T-cell (primary cell): ENCODE measurements at regions of chr14 and their contacts with region 1.

Region 1: GRCh38 chr14:53306267-53306721 is 153.2 kb upstream of the DDHD1 start:
- DNase-seq: peak in 22 of 35 experiments; percentile 2 to 61 (median 14)
- ATAC-seq: peak in 2 of 4 experiments; percentile 37 to 38
- H3K4me3 ChIP-seq: peak overlapping the region in 1 of 2 donors; percentile 10
- H3K4me3 Mint-ChIP-seq: peak overlapping the region; percentile 57 to 69 (median 60)
- H3K27ac ChIP-seq: no peak overlapping the region
- H3K27ac Mint-ChIP-seq: no peak overlapping the region
- H3K4me1 ChIP-seq: peaks cover 0 to 5% of the 10 kb centered on the region in 2 experiments
- H3K4me1 Mint-ChIP-seq: peaks cover 5 to 9% (median 7%) of the 10 kb centered on the region in 3 donors
- H3K27me3 ChIP-seq: no peaks in the 10 kb centered on the region
- H3K27me3 Mint-ChIP-seq: peaks cover 0 to 3% of the 10 kb centered on the region in 2 donors

Region 2: GRCh38 chr14:53285805-53286204 is 20.5 kb before region 1 on chr14:
- CTCF ChIA-PET with region 1: no interaction called
- POLR2A ChIA-PET with region 1: no interaction called
- DNase-seq: no peak
- ATAC-seq: no peak
- H3K4me3 ChIP-seq: no peak overlapping the region
- H3K4me3 Mint-ChIP-seq: no peak overlapping the region
- H3K27ac ChIP-seq: no peak overlapping the region
- H3K27ac Mint-ChIP-seq: no peak overlapping the region
- H3K4me1 ChIP-seq: no peaks in the 10 kb centered on the region
- H3K4me1 Mint-ChIP-seq: no peaks in the 10 kb centered on the region
- H3K27me3 ChIP-seq: no peaks in the 10 kb centered on the region
- H3K27me3 Mint-ChIP-seq: no peaks in the 10 kb centered on the region

Region 3: DNA sequence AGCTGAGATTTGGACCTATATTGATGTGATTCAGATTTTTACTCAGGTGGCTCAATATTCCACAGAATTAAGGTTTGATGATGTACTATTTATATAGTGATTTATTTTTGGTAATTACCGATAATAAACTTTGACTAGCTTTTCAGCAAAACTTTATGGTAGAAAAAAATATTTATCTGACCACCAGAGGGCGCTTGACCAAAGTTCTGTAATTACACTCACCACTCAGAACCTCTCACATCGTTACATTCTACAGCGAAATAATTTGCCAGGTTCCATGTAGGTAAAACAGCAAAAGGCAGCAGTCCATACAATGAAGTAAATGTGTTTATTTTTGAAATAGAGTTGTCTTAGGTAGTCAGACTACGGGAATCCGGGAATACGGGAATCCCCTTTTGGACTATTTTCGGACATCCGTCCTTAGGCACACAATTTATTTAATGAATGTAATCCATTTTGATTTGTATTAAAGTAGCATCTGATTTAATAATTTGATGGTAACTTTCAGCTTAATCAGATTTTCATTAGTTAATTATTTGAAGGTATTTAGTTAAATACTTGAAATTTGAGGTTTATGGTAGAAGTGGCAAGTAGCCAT is 10.2 kb before region 1 on chr14:
- CTCF ChIA-PET with region 1: interaction called, 9 to 10 read pairs
- POLR2A ChIA-PET with region 1: no interaction called
- DNase-seq: peak in 6 of 35 experiments; percentile 4 to 63 (median 10)
- ATAC-seq: no peak
- H3K4me3 ChIP-seq: no peak overlapping the region
- H3K4me3 Mint-ChIP-seq: no peak overlapping the region
- H3K27ac ChIP-seq: no peak overlapping the region
- H3K27ac Mint-ChIP-seq: no peak overlapping the region
- H3K4me1 ChIP-seq: no peaks in the 10 kb centered on the region
- H3K4me1 Mint-ChIP-seq: no peaks in the 10 kb centered on the region
- H3K27me3 ChIP-seq: no peaks in the 10 kb centered on the region
- H3K27me3 Mint-ChIP-seq: no peaks in the 10 kb centered on the region

Region 4: GRCh38 chr14:54782751-54783679 is 1476.7 kb after region 1 on chr14:
- CTCF ChIA-PET with region 1: interaction called in 1 of 2 experiments, 11 read pairs
- POLR2A ChIA-PET with region 1: no interaction called
- DNase-seq: peak in 5 of 35 experiments; percentile 3 to 22 (median 11)
- ATAC-seq: no peak
- H3K4me3 ChIP-seq: no peak overlapping the region
- H3K4me3 Mint-ChIP-seq: no peak overlapping the region
- H3K27ac ChIP-seq: no peak overlapping the region
- H3K27ac Mint-ChIP-seq: no peak overlapping the region
- H3K4me1 ChIP-seq: no peaks in the 10 kb centered on the region
- H3K4me1 Mint-ChIP-seq: peaks cover 0 to 7% (median 2%) of the 10 kb centered on the region in 3 donors
- H3K27me3 ChIP-seq: peaks cover 0 to 2% of the 10 kb centered on the region in 2 experiments
- H3K27me3 Mint-ChIP-seq: no peaks in the 10 kb centered on the region